Left ventricle myocardium inferior (tissue), 1 donor: ENCODE measurements at regions of chr6 and their contacts with region 1.

Region 1: DNA sequence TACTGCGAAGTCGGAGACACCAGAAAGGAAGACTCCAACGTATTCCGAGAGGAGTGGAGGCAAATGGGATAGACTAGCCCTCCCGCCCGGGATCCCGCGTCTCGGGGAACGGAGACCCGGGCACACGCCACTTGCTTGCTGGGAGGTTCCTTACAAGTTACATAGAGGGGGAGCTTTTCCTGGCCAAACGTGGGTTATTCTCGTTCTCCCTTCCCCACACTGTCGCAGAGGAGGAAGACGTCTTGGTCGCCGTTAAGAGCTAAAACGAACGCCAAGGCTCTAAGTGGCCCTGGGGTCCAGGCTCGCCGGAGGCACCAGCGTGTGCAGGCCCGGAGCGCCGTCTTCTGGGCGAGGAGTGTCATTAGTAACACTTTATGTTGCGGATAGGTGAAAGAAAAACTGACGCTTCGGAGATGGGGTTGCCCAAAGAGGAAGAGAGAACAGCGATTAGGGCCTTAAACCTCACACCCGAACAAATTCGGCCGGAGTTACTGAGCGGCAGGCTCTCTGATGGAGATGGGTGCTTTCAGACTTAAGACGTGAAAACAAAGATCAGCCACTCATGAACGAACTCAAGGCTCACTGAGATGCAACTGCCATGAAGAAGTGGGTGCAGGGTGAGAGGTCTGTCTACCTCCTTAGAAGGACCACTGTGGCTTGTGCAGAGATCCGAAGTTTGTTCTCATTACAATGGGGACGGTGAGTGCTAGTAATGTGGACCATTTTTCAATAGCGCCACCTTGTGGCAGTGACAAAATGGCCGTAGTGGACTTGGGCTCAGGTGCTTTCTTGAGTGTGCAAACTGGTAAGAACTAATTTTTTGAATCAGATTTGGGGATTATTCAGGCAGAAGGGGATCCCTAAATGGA is 11.7 kb upstream of the ZNF311 start:
- DNase-seq: peak; percentile 63
- H3K4me3 ChIP-seq: peak overlapping the region; percentile 69
- H3K27ac ChIP-seq: no peak overlapping the region
- H3K4me1 ChIP-seq: peaks cover 10% of the 10 kb centered on the region
- H3K27me3 ChIP-seq: peaks cover 77% of the 10 kb centered on the region
- CTCF ChIP-seq: peak; percentile 86

Region 2: GRCh38 chr6:28683944-28684538 is 332.8 kb before region 1 on chr6:
- intact Hi-C with region 1: loop called (anchors 5 kb)
- DNase-seq: no peak
- H3K4me3 ChIP-seq: no peak overlapping the region
- H3K27ac ChIP-seq: no peak overlapping the region
- H3K4me1 ChIP-seq: no peaks in the 10 kb centered on the region
- H3K27me3 ChIP-seq: peaks cover 96% of the 10 kb centered on the region
- CTCF ChIP-seq: peak; percentile 52

Region 3: DNA sequence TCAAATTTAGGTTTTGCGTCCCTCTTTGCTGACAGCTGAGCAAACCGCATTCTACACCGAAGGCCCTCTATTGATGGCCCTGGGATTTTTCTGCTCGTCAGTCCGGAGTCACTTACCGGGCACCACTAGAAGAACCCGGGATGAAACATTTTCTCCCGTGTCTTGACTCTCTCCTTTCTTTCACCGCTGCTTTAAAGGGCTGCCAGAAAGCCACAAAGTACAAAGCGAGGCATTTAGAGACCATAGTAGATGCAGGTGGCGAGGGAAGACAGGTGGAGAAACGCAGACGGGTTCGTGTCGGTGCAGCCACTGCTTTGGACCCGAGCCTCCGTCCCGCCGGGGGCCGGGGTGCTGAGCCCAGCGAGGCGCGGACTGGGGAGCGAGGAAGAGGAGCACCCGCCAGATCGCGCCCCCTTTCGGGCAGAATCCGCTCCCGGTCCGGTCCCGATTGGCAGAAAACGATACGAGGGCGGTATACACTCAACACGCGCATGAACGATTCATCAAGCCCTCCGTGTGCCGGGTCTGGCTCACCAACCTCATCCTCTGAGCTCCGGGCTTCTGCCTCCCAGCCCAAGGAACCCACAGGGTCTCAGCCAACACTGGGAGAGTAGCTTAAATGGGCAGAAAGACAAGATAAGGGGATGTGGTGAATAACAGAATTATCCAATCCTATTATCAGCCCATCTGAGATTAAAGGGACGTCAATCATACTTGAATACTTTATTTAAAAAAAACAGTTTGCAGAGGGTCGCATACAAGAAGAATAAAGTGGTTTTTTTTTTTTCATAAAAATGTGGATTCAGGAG is 178.0 kb before region 1 on chr6:
- intact Hi-C with region 1: loop called (anchors 2 kb)
- DNase-seq: peak; percentile 79
- H3K4me3 ChIP-seq: peak overlapping the region; percentile 77
- H3K27ac ChIP-seq: peak overlapping the region; percentile 58
- H3K4me1 ChIP-seq: peaks cover 24% of the 10 kb centered on the region
- H3K27me3 ChIP-seq: peaks cover 51% of the 10 kb centered on the region
- CTCF ChIP-seq: peak; percentile 68